B cell (primary cell): ENCODE measurements at regions of chr10 and their contacts with region 1.

Region 1: DNA sequence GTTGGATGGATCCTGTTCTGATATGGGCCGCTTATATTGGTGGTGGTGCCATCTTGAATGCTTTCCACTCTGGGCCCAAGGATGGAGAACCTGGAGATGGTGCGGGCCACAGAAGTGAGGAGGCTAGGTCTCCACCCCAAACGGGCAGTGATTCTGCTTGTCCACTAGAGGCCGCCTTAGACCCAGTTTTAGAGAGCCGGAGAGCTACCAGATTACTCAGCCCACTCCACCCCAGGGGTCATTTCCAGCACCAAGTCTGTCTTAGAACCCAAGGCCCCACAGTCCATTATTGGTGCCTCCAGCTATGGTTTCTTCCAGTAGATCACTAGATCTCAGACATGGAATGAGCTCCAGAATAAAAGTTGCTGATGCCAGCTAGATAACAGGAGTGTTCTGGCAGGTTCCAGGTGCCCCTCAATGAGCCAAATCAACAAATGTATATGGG is 11.8 kb upstream of the CAMK2G start:
- DNase-seq: peak; percentile 83
- ATAC-seq: peak; percentile 98
- H3K4me3 ChIP-seq: no peak overlapping the region
- H3K4me3 Mint-ChIP-seq: no peak overlapping the region
- H3K27ac ChIP-seq: no peak overlapping the region
- H3K27ac Mint-ChIP-seq: no peak overlapping the region
- H3K4me1 ChIP-seq: peaks cover 4 to 19% of the 10 kb centered on the region in 2 donors
- H3K4me1 Mint-ChIP-seq: peaks cover 9% of the 10 kb centered on the region
- H3K27me3 ChIP-seq: no peaks in the 10 kb centered on the region
- H3K27me3 Mint-ChIP-seq: no peaks in the 10 kb centered on the region
- CTCF ChIP-seq: peak; percentile 85

Region 2: GRCh38 chr10:72913287-72913686 is 972.8 kb before region 1 on chr10:
- CTCF ChIA-PET with region 1: no interaction called
- POLR2A ChIA-PET with region 1: no interaction called
- intact Hi-C with region 1: no loop called
- DNase-seq: no peak
- ATAC-seq: no peak
- H3K4me3 ChIP-seq: no peak overlapping the region
- H3K4me3 Mint-ChIP-seq: no peak overlapping the region
- H3K27ac ChIP-seq: no peak overlapping the region
- H3K27ac Mint-ChIP-seq: no peak overlapping the region
- H3K4me1 ChIP-seq: no peaks in the 10 kb centered on the region
- H3K4me1 Mint-ChIP-seq: no peaks in the 10 kb centered on the region
- H3K27me3 ChIP-seq: no peaks in the 10 kb centered on the region
- H3K27me3 Mint-ChIP-seq: peaks cover 3% of the 10 kb centered on the region
- CTCF ChIP-seq: no peak

Region 3: GRCh38 chr10:73772280-73773151 is 113.6 kb before region 1 on chr10:
- CTCF ChIA-PET with region 1: no interaction called
- POLR2A ChIA-PET with region 1: no interaction called
- intact Hi-C with region 1: no loop called
- DNase-seq: peak; percentile 91
- ATAC-seq: peak; percentile 66
- H3K4me3 ChIP-seq: peak overlapping the region; percentile 66 to 94 (median 89)
- H3K4me3 Mint-ChIP-seq: peak overlapping the region; percentile 97
- H3K27ac ChIP-seq: peak overlapping the region; percentile 85 to 93
- H3K27ac Mint-ChIP-seq: peak overlapping the region; percentile 98
- H3K4me1 ChIP-seq: peaks cover 30 to 47% of the 10 kb centered on the region in 2 donors
- H3K4me1 Mint-ChIP-seq: peaks cover 63% of the 10 kb centered on the region
- H3K27me3 ChIP-seq: no peaks in the 10 kb centered on the region
- H3K27me3 Mint-ChIP-seq: no peaks in the 10 kb centered on the region
- CTCF ChIP-seq: no peak

Region 4: DNA sequence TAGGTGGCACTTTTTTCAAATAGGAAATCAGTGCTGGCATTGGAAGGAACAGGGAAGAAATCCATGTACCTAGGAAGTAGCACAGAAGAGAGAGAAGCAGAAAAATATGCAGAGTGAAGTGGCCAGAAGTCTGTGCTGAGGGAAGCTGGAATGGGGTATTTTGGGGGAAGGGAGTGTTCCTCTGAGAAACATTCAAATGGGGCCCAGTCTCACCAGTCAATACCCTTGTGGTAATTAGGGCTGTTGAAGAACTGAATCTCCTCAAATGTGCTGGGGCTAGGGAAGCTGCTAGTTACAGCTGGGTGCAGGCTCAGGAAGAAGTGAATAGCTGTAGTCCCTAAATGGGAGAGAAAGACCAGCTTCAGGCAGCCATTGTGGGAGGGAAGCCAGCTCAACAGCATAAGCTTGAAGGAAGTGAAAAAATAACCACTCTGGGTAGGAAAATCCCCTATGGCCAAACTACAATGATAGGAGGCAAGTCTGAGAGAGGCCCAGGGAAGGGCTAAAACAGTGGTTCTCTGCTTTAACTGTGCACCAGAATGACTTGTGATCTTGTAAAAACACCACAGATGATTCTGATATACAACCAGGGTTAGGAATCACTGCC is 82.3 kb before region 1 on chr10:
- CTCF ChIA-PET with region 1: no interaction called
- POLR2A ChIA-PET with region 1: no interaction called
- intact Hi-C with region 1: no loop called
- DNase-seq: peak; percentile 43
- ATAC-seq: peak; percentile 63
- H3K4me3 ChIP-seq: no peak overlapping the region
- H3K4me3 Mint-ChIP-seq: no peak overlapping the region
- H3K27ac ChIP-seq: peak overlapping the region; percentile 6 to 68
- H3K27ac Mint-ChIP-seq: peak overlapping the region; percentile 84
- H3K4me1 ChIP-seq: peaks cover 8 to 19% of the 10 kb centered on the region in 2 donors
- H3K4me1 Mint-ChIP-seq: peaks cover 25% of the 10 kb centered on the region
- H3K27me3 ChIP-seq: no peaks in the 10 kb centered on the region
- H3K27me3 Mint-ChIP-seq: no peaks in the 10 kb centered on the region
- CTCF ChIP-seq: no peak

Region 5: DNA sequence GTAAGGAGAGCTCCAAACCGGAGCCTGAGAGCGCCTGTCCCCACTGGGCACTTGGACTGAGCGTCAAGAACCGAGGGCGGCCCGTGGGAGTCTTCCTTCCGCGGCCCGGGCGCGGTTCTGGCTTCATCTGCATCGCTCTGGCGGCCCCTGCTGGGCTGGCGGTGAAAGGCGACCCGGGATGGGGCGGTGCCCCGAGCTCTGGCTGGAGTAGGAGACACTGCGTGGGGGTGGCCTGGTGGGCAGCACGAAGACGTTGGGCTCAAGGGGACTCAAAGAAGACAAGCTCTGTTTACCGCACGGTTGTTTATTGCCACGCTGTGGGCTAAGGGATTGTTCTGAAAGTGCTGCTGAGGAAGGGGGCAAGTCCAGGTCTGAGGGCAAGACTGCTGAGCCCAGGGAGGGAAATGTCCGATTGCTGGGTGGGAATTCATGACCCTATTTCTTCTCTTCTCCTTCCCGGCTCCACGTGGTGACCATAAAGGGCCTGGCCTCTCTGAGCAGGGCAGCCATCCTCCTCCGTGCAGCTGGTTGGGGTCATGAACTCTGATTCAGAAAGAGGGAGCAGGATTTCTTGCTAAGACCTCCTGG is 54.6 kb after region 1 on chr10:
- CTCF ChIA-PET with region 1: interaction called, 261 read pairs
- POLR2A ChIA-PET with region 1: no interaction called
- intact Hi-C with region 1: loop called (anchors 1 kb)
- DNase-seq: peak; percentile 78
- ATAC-seq: peak; percentile 100
- H3K4me3 ChIP-seq: peak overlapping the region in 2 of 5 experiments; percentile 15 to 30
- H3K4me3 Mint-ChIP-seq: peak overlapping the region; percentile 71
- H3K27ac ChIP-seq: no peak overlapping the region
- H3K27ac Mint-ChIP-seq: peak overlapping the region; percentile 50
- H3K4me1 ChIP-seq: peaks cover 0 to 8% of the 10 kb centered on the region in 2 donors
- H3K4me1 Mint-ChIP-seq: peaks cover 7% of the 10 kb centered on the region
- H3K27me3 ChIP-seq: no peaks in the 10 kb centered on the region
- H3K27me3 Mint-ChIP-seq: peaks cover 4% of the 10 kb centered on the region
- CTCF ChIP-seq: peak; percentile 96

Region 6: GRCh38 chr10:74035303-74035702 is 149.2 kb after region 1 on chr10:
- CTCF ChIA-PET with region 1: interaction called, 17 read pairs
- POLR2A ChIA-PET with region 1: no interaction called
- intact Hi-C with region 1: loop called (anchors 1 kb)
- DNase-seq: no peak
- ATAC-seq: no peak
- H3K4me3 ChIP-seq: no peak overlapping the region
- H3K4me3 Mint-ChIP-seq: no peak overlapping the region
- H3K27ac ChIP-seq: peak overlapping the region in 1 of 2 donors; percentile 37
- H3K27ac Mint-ChIP-seq: peak overlapping the region; percentile 59
- H3K4me1 ChIP-seq: peaks cover 16 to 18% of the 10 kb centered on the region in 2 donors
- H3K4me1 Mint-ChIP-seq: peaks cover 41% of the 10 kb centered on the region
- H3K27me3 ChIP-seq: no peaks in the 10 kb centered on the region
- H3K27me3 Mint-ChIP-seq: no peaks in the 10 kb centered on the region
- CTCF ChIP-seq: no peak

Region 7: DNA sequence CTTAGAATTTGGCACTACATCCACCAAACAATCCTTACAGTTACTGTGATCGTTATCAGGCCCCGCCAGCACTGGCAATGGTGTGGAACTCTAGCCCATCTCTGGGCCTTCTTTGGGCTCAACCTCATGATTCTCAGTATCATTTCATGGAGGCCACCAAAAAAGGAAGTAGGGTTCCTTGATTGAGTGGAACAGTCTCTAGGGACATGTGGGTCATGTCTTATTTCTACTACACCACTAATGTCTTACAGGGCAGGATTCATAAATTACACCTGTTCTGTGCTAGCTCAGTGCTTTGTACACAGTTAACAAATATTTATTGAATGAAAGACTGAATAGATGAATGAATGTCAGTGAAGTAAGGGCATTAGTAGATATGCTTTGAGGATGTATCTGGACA is 210.7 kb after region 1 on chr10:
- CTCF ChIA-PET with region 1: interaction called, 10 read pairs
- POLR2A ChIA-PET with region 1: no interaction called
- intact Hi-C with region 1: no loop called
- DNase-seq: peak; percentile 65
- ATAC-seq: peak; percentile 96
- H3K4me3 ChIP-seq: no peak overlapping the region
- H3K4me3 Mint-ChIP-seq: peak overlapping the region; percentile 24
- H3K27ac ChIP-seq: peak overlapping the region in 1 of 2 donors; percentile 38
- H3K27ac Mint-ChIP-seq: peak overlapping the region; percentile 76
- H3K4me1 ChIP-seq: peaks cover 11 to 13% of the 10 kb centered on the region in 2 donors
- H3K4me1 Mint-ChIP-seq: peaks cover 21% of the 10 kb centered on the region
- H3K27me3 ChIP-seq: no peaks in the 10 kb centered on the region
- H3K27me3 Mint-ChIP-seq: no peaks in the 10 kb centered on the region
- CTCF ChIP-seq: no peak

Region 8: GRCh38 chr10:74227697-74228424 is 341.8 kb after region 1 on chr10:
- CTCF ChIA-PET with region 1: interaction called, 11 read pairs
- POLR2A ChIA-PET with region 1: no interaction called
- intact Hi-C with region 1: no loop called
- DNase-seq: peak; percentile 52
- ATAC-seq: peak; percentile 66
- H3K4me3 ChIP-seq: peak overlapping the region in 2 of 5 experiments; percentile 14 to 15
- H3K4me3 Mint-ChIP-seq: peak overlapping the region; percentile 72
- H3K27ac ChIP-seq: peak overlapping the region; percentile 45 to 72
- H3K27ac Mint-ChIP-seq: peak overlapping the region; percentile 89
- H3K4me1 ChIP-seq: peaks cover 9 to 14% of the 10 kb centered on the region in 2 donors
- H3K4me1 Mint-ChIP-seq: peaks cover 16% of the 10 kb centered on the region
- H3K27me3 ChIP-seq: no peaks in the 10 kb centered on the region
- H3K27me3 Mint-ChIP-seq: no peaks in the 10 kb centered on the region
- CTCF ChIP-seq: no peak